Heart right ventricle (tissue), 16 donors: ENCODE measurements at regions of chr3 and their contacts with region 1.

Region 1: DNA sequence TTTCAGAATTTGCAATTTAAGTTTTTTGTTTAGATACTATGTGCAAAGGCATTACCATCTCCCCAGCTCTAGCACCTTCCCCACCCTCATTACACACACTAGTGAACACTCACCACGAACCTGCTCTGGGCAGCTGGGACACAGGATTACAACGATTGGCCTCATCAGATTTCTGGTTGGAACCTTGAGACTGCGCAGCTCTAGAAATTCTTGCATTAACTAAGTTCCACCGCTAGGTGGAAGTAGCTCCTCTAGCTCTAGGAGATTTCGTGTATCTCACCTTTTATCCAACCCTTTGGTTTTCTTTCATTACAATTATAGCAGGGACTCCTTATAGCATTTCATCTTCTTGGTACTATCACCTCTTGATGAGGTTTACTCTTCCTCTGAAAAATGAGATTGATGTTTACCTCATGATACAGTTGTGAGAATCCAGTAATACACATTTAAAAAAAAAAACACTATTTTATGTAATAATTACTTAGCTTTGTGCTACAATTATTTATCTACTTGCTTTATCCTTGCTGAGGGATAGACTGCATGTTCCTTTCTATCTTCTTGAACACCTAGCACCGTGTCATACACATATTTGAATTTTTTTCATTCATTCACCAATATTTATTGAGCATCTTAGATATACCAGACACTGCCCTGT is 28.7 kb upstream of the PLOD2 start:
- DNase-seq: no peak
- ATAC-seq: peak in 6 of 8 donors; percentile 57 to 81 (median 68)
- H3K4me3 ChIP-seq: no peak overlapping the region
- H3K27ac ChIP-seq: no peak overlapping the region
- H3K4me1 ChIP-seq: peaks cover 0 to 8% (median 0%) of the 10 kb centered on the region in 9 donors
- H3K27me3 ChIP-seq: no peaks in the 10 kb centered on the region
- CTCF ChIP-seq: peak; percentile 56 to 85 (median 77)

Region 2: DNA sequence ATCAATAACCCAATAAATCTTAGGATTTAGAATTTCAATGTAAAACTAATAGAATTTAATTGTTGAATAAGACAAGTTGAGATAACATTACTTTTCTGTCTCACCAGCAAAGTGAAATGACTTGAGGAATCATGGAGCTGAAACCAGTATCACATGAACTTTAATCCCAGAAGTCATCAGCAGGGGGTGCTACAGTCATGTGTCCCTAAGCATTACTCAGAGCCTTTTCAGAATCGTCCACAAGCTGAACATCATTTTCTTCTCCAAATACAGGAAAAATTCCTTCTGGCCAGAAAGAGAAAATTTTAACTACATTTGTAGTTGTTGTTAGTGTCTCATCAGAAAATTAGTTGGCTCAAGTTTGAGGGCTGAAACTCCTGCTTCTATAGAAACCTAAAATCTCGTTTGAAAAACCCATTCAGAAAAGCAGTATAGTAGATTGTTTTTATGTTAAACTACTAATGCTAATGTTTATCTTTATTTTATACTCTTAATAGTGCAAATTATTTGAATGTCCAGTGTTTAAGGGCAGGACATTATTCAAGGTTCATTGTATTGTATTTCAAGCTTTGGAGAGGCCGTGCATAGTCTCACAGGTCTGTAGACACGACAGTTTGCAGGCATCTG is 412.8 kb before region 1 on chr3:
- intact Hi-C with region 1: loop called in 1 of 10 experiments (anchors 10 kb)
- DNase-seq: peak in 1 of 2 donors; percentile 21
- ATAC-seq: no peak
- H3K4me3 ChIP-seq: no peak overlapping the region
- H3K27ac ChIP-seq: no peak overlapping the region
- H3K4me1 ChIP-seq: peaks cover 0 to 3% (median 0%) of the 10 kb centered on the region in 9 donors
- H3K27me3 ChIP-seq: no peaks in the 10 kb centered on the region
- CTCF ChIP-seq: peak; percentile 20 to 61 (median 50)

Region 3: GRCh38 chr3:146160964-146161662 is 28.5 kb before region 1 on chr3 and contains the start of gene PLOD2:
- intact Hi-C with region 1: no loop called
- DNase-seq: peak; percentile 72 to 82
- ATAC-seq: peak; percentile 72 to 95 (median 80)
- H3K4me3 ChIP-seq: peak within 1 kb of the TSS; percentile 61 to 88 (median 78)
- H3K27ac ChIP-seq: peak within 1 kb of the TSS; percentile 89 to 98 (median 94)
- H3K4me1 ChIP-seq: peaks cover 0 to 63% (median 44%) of the 10 kb centered on the region in 9 donors
- H3K27me3 ChIP-seq: peaks cover 0 to 32% (median 0%) of the 10 kb centered on the region in 7 donors
- CTCF ChIP-seq: no peak
- total RNA-seq, gene PLOD2: 12.5 to 44.6 (median 16.8) TPM

Region 4: DNA sequence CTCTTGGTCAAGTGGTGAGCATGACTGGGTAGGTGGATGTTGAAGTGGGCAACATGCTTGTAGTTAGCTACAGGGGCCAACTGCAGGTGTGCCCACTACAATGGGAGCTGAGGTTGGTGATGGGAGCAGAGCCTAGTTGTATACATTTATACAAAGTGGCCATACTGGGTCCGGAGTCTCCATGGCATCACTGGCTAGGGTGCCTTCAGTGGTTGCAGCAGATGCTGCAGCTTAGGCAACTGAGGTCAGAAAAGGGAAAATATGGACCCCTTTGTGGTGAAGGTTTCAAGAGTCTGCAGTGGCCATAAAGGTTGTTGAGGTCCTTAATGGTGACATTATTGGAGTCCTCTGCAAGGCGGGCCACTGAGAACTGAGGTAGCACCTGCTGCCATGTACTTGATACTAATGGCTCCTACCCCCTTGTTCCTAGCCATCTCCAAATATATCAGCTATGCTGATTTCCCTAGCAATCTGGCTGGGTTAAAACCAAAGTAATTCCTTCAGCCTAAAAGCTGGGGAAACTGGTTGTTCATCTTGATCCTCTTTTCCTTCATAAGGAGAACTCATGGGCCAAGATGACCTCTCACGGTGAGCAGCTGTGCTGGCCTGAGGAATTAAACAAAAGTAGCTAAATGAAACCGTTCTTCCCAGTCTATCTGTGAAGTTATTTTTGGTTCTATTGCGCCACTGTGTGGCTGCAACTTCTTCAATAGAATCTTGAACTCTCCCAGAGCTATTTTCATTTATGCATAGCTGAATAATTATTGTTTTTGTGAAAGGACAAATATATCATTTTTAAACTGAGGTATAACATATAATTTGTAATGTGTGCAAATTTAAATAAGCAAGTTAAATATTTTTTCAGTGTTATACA is 137.3 kb after region 1 on chr3:
- intact Hi-C with region 1: loop called in 2 of 10 experiments (anchors 1 to 2 kb)
- DNase-seq: peak in 1 of 2 donors; percentile 46
- ATAC-seq: peak in 7 of 8 donors; percentile 75 to 92 (median 87)
- H3K4me3 ChIP-seq: no peak overlapping the region
- H3K27ac ChIP-seq: no peak overlapping the region
- H3K4me1 ChIP-seq: no peaks in the 10 kb centered on the region
- H3K27me3 ChIP-seq: no peaks in the 10 kb centered on the region
- CTCF ChIP-seq: peak; percentile 9 to 80 (median 65)

Region 5: DNA sequence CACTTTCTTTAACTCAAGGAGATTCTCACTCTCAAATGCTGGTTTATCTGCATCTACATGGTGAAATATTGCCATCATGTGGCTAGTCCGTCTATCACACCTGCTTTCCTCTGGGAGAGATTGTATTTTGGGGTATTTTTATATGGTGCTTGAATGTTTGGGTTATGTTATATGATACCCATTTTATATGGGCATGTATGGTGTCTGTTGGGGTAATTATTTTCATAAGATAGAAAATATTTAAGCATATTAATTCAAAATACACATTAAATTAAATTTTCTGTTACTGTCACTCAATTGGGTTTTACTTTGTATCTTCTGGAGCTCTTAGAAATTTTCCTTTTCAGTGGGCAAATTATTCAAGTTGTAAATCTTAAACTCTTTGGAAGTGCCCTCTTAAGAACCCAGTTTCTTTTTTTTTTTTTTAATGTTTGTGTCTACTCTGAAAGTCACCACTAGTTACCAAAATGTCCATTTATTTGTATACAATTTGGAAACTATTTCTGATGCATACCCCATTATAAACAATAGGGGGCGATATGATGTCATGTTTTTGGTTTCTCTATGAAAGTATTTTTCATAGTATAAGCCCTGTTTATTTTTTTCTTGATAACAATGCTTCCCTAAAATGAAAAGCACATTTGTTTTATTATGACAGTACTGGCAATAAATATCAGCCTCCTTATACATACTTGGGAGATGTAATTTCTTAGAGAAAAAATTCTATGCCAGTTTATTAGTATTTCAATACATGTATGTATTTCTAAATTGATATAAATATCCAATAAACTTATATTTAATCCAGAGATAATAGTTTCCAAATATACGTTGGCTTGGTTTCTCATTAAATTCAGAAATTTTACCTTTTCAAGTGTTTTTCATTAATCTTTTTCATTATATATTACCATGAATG is 451.6 kb after region 1 on chr3:
- intact Hi-C with region 1: no loop called
- DNase-seq: no peak
- ATAC-seq: no peak
- H3K4me3 ChIP-seq: no peak overlapping the region
- H3K27ac ChIP-seq: no peak overlapping the region
- H3K4me1 ChIP-seq: no peaks in the 10 kb centered on the region
- H3K27me3 ChIP-seq: no peaks in the 10 kb centered on the region
- CTCF ChIP-seq: peak in 8 of 9 donors; percentile 15 to 60 (median 44)